Heart left ventricle (tissue), 16 donors: ENCODE measurements at regions of chr12 and their contacts with region 1.

Region 1: DNA sequence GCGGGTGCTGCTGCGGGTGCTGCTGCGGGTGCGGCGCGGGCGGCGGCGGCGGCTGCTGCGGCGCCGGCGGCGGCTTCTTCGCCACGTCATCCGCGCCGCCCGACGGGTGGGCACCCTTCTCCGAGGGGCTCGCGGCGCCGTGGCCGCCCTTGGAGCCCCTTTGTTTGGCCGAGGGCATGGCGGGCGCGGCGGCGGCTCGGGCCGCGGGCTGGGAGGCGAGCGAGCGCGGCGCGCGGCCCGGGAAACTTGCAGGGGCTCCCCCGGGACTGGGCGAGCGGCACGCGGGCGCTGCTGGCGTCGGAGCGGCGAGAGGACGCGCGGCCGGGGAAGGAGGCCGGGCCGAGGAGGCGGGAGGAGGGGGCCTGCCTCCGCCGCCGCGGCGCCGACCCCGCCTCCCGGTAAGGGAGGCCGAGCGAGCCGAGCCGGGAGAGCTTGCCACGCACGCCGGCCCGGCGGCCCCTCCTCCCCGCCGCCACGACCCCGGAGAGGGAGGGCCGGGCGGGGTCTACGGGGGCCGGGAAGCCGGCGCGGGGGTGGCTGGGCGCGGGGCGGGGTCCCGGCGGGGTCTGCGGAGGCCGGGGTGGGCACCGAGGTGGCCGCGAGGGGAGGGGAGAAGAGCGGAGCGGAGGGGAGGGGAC is at the start of gene CKAP4:
- DNase-seq: peak; percentile 87 to 92 (median 87)
- ATAC-seq: peak; percentile 45 to 85 (median 84)
- H3K4me3 ChIP-seq: peak within 1 kb of the TSS; percentile 75 to 95 (median 91)
- H3K27ac ChIP-seq: peak within 1 kb of the TSS; percentile 90 to 100 (median 99)
- H3K4me1 ChIP-seq: peaks cover 3 to 55% (median 36%) of the 10 kb centered on the region in 12 donors
- H3K27me3 ChIP-seq: no peaks in the 10 kb centered on the region
- CTCF ChIP-seq: no peak
- POLR2A ChIP-seq: peak in 1 of 2 donors; percentile 42
- total RNA-seq, gene CKAP4: 39.9 to 70.7 (median 53.7) TPM

Region 2: DNA sequence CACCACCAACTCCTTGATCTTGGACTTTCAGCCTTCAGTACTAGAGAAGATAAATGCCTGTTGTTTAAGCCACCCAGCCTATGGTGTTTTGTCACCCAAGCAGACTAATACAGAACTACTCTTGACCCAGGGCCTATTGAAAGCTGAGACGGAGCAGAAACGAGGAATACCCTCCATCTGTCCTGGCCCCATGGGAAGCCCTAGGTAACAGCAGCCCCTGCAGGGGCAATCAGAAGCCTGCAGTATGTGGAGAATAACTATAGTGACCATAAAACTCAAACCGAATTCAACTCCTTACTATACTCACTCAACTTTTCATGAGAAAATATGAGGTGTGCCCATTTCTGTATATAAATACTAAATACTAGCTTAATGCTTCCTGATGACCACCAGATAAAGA is 416.4 kb before region 1 on chr12:
- intact Hi-C with region 1: no loop called
- DNase-seq: no peak
- ATAC-seq: no peak
- H3K4me3 ChIP-seq: no peak overlapping the region
- H3K27ac ChIP-seq: no peak overlapping the region
- H3K4me1 ChIP-seq: peaks cover 0 to 6% (median 0%) of the 10 kb centered on the region in 12 donors
- H3K27me3 ChIP-seq: no peaks in the 10 kb centered on the region
- CTCF ChIP-seq: no peak
- POLR2A ChIP-seq: no peak

Region 3: DNA sequence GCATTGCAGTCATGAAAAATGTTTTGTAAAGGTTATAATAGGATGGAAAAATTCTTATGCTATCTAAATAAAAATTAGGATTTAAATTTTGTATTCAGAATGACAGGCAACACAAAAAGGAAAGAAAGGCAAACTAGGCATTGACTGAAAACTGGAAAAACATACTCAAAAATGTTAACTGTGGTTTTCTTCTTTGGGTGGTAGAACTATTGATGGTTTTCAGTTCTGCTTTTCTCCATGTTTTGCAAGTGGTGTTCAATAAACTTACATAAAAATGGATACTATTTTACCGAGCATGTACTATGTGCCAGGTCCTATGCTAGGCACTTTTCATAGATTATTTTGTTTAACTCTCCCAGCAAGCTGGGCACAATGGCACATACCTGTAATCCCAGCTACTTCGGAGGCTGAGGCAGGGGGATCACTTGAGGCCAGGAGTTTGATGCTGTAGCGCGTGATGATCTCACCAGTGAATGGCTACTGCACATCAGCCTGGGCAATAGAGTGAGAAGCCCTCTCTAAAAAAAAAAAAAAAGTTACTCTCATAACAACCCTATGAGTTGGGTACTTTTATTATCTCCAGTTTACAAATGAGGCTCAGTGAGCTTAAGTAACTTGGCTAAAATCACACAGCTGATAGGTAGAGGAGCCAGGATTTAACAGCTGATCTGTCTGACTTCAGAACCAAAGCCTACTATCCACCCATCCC is 28.4 kb after region 1 on chr12:
- intact Hi-C with region 1: loop called in 3 of 10 experiments (anchors 2 to 5 kb)
- DNase-seq: no peak
- ATAC-seq: no peak
- H3K4me3 ChIP-seq: no peak overlapping the region
- H3K27ac ChIP-seq: no peak overlapping the region
- H3K4me1 ChIP-seq: peaks cover 0 to 16% (median 4%) of the 10 kb centered on the region in 12 donors
- H3K27me3 ChIP-seq: no peaks in the 10 kb centered on the region
- CTCF ChIP-seq: no peak
- POLR2A ChIP-seq: no peak

Region 4: DNA sequence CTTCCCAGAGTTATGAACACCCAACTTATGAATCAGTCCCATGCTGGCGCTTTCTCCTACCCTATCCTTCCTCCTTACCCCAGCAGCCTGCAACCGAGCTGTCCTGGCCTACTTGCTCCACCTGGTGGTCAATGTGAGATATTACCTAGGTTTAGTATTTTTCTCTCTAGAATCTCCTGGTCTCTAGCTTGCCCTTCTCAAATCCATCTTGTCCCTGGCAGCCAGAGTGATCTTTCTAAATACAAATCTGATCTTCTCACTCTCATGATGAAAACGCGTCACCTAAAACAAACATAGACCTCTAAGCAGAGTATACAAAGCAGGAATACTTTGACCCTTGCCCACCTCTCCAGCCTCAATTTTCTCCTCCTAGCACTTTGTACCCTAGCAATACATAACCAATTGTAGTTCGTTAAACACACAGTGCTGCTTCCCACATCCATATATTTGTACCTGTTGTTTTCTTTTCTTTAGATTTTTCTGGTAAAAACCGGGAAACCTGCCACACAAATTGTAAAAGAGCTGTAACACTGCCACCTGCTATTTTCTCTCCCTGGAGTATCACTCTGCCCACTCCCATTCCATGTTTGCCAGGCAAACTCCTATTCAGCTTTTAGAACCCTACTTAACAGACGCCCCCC is 34.8 kb after region 1 on chr12:
- intact Hi-C with region 1: loop called in 2 of 10 experiments (anchors 5 kb)
- DNase-seq: peak in 2 of 5 donors; percentile 34 to 47
- ATAC-seq: peak; percentile 23 to 63 (median 56)
- H3K4me3 ChIP-seq: no peak overlapping the region
- H3K27ac ChIP-seq: no peak overlapping the region
- H3K4me1 ChIP-seq: peaks cover 0 to 22% (median 12%) of the 10 kb centered on the region in 12 donors
- H3K27me3 ChIP-seq: no peaks in the 10 kb centered on the region
- CTCF ChIP-seq: peak; percentile 56 to 76 (median 70)
- POLR2A ChIP-seq: no peak

Region 5: GRCh38 chr12:106296193-106296877 is 48.5 kb after region 1 on chr12:
- intact Hi-C with region 1: loop called in 7 of 10 experiments (anchors 5 to 10 kb)
- DNase-seq: no peak
- ATAC-seq: peak; percentile 84 to 92 (median 87)
- H3K4me3 ChIP-seq: no peak overlapping the region
- H3K27ac ChIP-seq: peak overlapping the region; percentile 12 to 84 (median 73)
- H3K4me1 ChIP-seq: peaks cover under 1 to 31% (median 20%) of the 10 kb centered on the region in 12 donors
- H3K27me3 ChIP-seq: no peaks in the 10 kb centered on the region
- CTCF ChIP-seq: no peak
- POLR2A ChIP-seq: no peak

Region 6: GRCh38 chr12:106302401-106303201 is 54.8 kb after region 1 on chr12 and contains the start of gene TCP11L2:
- intact Hi-C with region 1: loop called in 9 of 10 experiments (anchors 2 to 10 kb)
- DNase-seq: peak; percentile 89 to 94 (median 92)
- ATAC-seq: peak; percentile 66 to 85 (median 80)
- H3K4me3 ChIP-seq: peak within 1 kb of the TSS; percentile 80 to 97 (median 94)
- H3K27ac ChIP-seq: peak within 1 kb of the TSS; percentile 92 to 100 (median 98)
- H3K4me1 ChIP-seq: peaks cover 8 to 72% (median 63%) of the 10 kb centered on the region in 12 donors
- H3K27me3 ChIP-seq: no peaks in the 10 kb centered on the region
- CTCF ChIP-seq: no peak
- POLR2A ChIP-seq: peak in 1 of 2 donors; percentile 82
- total RNA-seq, gene TCP11L2: 60.8 to 147 (median 113) TPM

Region 7: DNA sequence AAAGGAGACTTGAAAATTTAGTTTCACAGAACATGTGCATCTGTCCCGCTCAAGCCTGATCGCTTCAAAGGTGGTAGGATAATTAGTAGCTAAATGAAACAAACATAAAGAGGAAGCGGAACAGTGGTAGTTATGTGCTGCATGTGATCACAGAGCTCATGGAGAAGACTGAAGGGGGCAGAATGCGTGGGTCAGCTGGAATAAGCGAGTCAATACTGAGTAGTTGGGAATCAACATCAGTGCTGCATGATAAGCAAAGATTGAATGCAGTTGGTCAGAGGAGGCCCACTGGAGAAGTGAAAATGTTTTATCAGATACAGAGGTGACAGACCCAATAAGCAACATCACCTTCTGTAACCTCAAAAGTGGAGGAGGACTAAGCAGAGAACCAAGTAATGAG is 239.9 kb after region 1 on chr12:
- intact Hi-C with region 1: no loop called
- DNase-seq: no peak
- ATAC-seq: no peak
- H3K4me3 ChIP-seq: no peak overlapping the region
- H3K27ac ChIP-seq: no peak overlapping the region
- H3K4me1 ChIP-seq: no peaks in the 10 kb centered on the region
- H3K27me3 ChIP-seq: no peaks in the 10 kb centered on the region
- CTCF ChIP-seq: no peak
- POLR2A ChIP-seq: no peak